Activated CD4-positive, alpha-beta T cell treated with anti-CD3 and anti-CD28 coated beads, Interleukin-2, amount 10 ng/mL, durations not matched to agents 24 days and 14 days (primary cell): ENCODE measurements at regions of chr1 and their contacts with region 1.

Region 1: DNA sequence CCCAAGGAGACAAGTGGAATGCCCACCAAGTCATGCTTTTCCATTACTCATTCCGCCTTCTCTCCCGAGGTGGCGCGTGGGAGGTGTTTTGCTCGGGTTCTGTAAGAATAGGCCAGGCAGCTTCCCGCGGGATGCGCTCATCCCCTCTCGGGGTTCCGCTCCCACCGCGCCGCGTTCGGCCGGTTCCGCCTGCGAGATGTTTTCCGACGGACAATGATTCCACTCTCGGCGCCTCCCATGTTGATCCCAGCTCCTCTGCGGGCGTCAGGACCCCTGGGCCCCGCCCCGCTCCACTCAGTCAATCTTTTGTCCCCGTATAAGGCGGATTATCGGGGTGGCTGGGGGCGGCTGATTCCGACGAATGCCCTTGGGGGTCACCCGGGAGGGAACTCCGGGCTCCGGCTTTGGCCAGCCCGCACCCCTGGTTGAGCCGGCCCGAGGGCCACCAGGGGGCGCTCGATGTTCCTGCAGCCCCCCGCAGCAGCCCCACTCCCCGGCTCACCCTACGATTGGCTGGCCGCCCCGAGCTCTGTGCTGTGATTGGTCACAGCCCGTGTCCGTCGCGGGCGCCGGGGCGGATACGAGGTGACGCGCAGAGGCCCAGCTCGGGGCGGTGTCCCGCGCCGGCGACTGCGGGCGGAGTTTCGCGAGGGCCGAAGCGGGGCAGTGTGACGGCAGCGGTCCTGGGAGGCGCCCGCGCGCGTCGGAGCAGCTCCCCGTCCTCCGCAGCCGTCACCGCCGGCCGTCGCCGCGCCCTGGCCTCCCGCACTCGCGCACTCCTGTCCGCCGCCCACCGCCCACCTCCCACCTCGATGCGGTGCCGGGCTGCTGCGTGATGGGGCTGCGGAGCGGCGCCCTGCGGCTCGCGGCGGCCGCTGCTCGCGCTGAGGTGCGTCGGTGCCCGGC is at the start of gene KIF1B:
- DNase-seq: peak; percentile 99
- H3K4me3 Mint-ChIP-seq: peak within 1 kb of the TSS; percentile 94
- H3K27ac Mint-ChIP-seq: peak within 1 kb of the TSS; percentile 86
- H3K4me1 Mint-ChIP-seq: peaks cover 26% of the 10 kb centered on the region
- H3K27me3 Mint-ChIP-seq: peaks cover 5% of the 10 kb centered on the region
- total RNA-seq, gene KIF1B: 17.8 and 19.3 TPM in 2 replicates

Region 2: GRCh38 chr1:10032590-10033358 is 177.4 kb before region 1 on chr1 and contains the start of gene UBE4B:
- intact Hi-C with region 1: loop called (anchors 1 kb)
- DNase-seq: peak; percentile 100
- H3K4me3 Mint-ChIP-seq: peak within 1 kb of the TSS; percentile 85
- H3K27ac Mint-ChIP-seq: peak within 1 kb of the TSS; percentile 97
- H3K4me1 Mint-ChIP-seq: peaks cover 20% of the 10 kb centered on the region
- H3K27me3 Mint-ChIP-seq: no peaks in the 10 kb centered on the region
- total RNA-seq, gene UBE4B: 29.9 and 31.1 TPM in 2 replicates

Region 3: GRCh38 chr1:10170239-10170574 is 40.0 kb before region 1 on chr1:
- intact Hi-C with region 1: loop called (anchors 1 kb)
- DNase-seq: peak; percentile 77
- H3K4me3 Mint-ChIP-seq: peak overlapping the region; percentile 67
- H3K27ac Mint-ChIP-seq: peak overlapping the region; percentile 85
- H3K4me1 Mint-ChIP-seq: peaks cover 45% of the 10 kb centered on the region
- H3K27me3 Mint-ChIP-seq: no peaks in the 10 kb centered on the region

Region 4: DNA sequence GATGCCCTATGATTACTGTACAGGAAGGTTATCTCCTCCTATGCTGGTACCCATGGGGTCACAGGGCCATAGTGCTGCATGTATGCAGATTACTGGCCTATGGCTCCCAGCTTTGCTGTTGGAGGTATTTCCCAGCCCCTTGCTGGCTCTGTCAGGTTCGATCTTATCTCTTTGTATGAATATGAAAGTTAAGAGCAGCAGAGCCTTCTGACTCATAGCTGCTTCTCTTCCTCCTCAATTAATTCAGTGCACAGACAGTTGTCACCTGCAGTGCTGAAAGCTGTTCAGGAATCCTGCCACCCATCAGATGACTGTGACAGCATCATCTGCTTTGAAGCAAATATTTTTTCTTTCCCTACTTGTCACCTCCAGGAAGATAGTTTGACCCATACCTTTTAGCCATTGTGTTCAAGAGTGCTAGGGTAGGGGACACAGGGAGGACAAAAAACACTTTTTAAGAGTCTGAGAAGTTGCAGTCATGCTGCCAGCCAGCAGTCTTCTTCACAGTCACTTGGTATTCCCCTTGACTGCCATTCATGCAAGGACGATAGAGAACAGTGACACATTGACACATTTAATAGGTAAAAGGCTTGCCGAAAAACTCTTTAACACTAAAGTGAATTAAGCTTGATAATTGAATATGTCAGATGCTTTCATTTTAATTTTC is 73.3 kb after region 1 on chr1:
- intact Hi-C with region 1: loop called (anchors 1 kb)
- DNase-seq: peak; percentile 72
- H3K4me3 Mint-ChIP-seq: no peak overlapping the region
- H3K27ac Mint-ChIP-seq: peak overlapping the region; percentile 17
- H3K4me1 Mint-ChIP-seq: peaks cover 20% of the 10 kb centered on the region
- H3K27me3 Mint-ChIP-seq: no peaks in the 10 kb centered on the region

Region 5: DNA sequence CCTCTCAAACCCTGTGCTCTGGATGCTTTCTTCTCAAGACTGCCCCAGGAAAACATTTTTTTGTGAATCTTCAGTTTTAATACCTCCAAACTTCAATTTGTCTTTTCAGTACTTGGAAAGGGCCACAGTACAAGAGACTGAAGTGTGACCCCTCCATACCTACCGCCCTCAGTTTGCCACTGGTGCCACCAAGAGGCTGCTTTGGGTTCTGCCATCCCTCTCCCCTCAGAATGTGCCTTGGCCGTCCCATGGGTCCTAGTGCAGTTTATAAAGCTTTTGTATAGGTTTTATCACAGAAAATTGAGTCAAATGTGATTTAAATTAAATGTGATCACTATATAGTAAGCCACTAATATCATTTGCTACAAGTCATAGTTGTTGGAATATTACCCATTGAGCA is 127.9 kb after region 1 on chr1:
- intact Hi-C with region 1: loop called (anchors 1 kb)
- DNase-seq: peak; percentile 75
- H3K4me3 Mint-ChIP-seq: no peak overlapping the region
- H3K27ac Mint-ChIP-seq: no peak overlapping the region
- H3K4me1 Mint-ChIP-seq: no peaks in the 10 kb centered on the region
- H3K27me3 Mint-ChIP-seq: no peaks in the 10 kb centered on the region

Region 6: GRCh38 chr1:10398734-10399623 is 188.8 kb after region 1 on chr1 and contains the start of gene PGD:
- intact Hi-C with region 1: loop called (anchors 2 kb)
- DNase-seq: peak; percentile 99
- H3K4me3 Mint-ChIP-seq: peak within 1 kb of the TSS; percentile 93
- H3K27ac Mint-ChIP-seq: peak within 1 kb of the TSS; percentile 84
- H3K4me1 Mint-ChIP-seq: peaks cover 22% of the 10 kb centered on the region
- H3K27me3 Mint-ChIP-seq: no peaks in the 10 kb centered on the region
- total RNA-seq, gene PGD: 142 and 144 TPM in 2 replicates